Breast epithelium (tissue), 4 donors: ENCODE measurements at regions of chr20 and their contacts with region 1.

Region 1: DNA sequence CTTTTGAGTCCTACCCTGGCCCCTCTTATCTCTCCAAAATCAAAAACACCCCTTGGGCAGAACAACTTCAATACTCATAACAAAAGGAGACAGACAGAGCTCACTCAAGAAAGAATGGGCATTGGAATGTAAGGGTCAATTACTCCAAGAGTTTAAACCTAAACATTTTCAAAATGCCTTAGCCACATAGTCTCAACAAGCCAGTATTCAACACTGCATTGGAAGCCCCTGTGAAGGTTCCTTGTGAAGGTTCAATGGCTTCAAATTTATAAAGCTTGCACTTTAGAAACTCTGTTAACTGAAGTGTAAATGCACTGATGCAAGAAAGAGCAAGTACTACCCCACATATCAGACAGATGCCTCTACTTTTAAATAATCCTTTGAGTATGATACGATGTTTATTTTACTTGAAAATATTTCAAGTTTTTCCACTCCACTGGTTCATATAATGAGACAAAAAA is 139.1 kb upstream of the LAMP5 start:
- DNase-seq: no peak
- H3K4me3 ChIP-seq: no peak overlapping the region
- H3K27ac ChIP-seq: no peak overlapping the region
- H3K4me1 ChIP-seq: no peaks in the 10 kb centered on the region
- H3K27me3 ChIP-seq: no peaks in the 10 kb centered on the region
- CTCF ChIP-seq: no peak
- POLR2A ChIP-seq: no peak

Region 2: GRCh38 chr20:8309634-8310033 is 1065.6 kb before region 1 on chr20:
- intact Hi-C with region 1: loop called (anchors 5 kb)
- DNase-seq: no peak
- H3K4me3 ChIP-seq: no peak overlapping the region
- H3K27ac ChIP-seq: no peak overlapping the region
- H3K4me1 ChIP-seq: no peaks in the 10 kb centered on the region
- H3K27me3 ChIP-seq: no peaks in the 10 kb centered on the region
- CTCF ChIP-seq: no peak
- POLR2A ChIP-seq: no peak